Mammary epithelial cell (primary cell): ENCODE measurements at regions of chr3 and their contacts with region 1.

Region 1: DNA sequence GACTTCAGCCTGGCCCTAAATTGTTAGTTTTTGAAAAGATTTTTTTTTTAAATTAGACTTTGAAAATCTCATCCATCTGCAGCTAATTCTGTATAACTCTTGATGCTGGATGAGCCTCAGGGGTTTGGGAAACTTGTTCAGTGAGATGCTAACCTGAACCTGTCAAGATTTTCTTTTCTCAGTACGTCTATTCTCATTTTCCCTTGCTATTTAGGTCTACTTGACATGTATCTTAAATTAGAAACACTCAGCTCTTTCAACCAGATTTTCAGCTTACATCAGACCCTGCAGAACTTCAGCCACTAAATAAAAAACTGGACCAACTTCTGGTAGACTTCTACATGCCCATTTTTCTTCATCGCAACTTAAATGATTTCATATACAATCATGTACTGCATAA is 61.4 kb downstream of the MFSD1 start:
- DNase-seq: no peak
- H3K4me3 ChIP-seq: no peak overlapping the region
- H3K27ac ChIP-seq: no peak overlapping the region
- H3K4me1 ChIP-seq: no peaks in the 10 kb centered on the region
- H3K27me3 ChIP-seq: no peaks in the 10 kb centered on the region
- CTCF ChIP-seq: no peak

Region 2: DNA sequence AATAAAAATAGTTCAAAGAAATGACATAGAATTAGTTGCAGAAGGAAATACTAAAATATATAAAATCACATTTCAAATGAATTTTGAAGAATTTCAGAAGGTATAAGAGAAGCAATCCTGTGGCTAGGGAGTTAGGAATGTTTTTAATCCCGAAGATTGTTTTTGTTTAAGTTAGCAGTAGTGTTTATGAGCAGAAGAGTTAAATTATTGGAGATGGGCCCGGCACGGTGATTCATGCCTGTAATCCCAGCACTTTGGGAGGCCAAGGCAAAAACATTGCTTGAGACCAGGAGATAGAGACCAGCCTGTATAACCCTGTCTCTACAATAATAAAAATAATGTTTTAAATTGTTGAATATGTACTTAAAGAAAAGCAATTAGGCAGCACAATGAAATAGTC is 371.1 kb after region 1 on chr3:
- CTCF ChIA-PET with region 1: no interaction called
- dilution Hi-C with region 1: loop called (anchors 25 kb)
- in situ Hi-C with region 1: no loop called
- intact Hi-C with region 1: no loop called
- DNase-seq: no peak
- H3K4me3 ChIP-seq: no peak overlapping the region
- H3K27ac ChIP-seq: no peak overlapping the region
- H3K4me1 ChIP-seq: no peaks in the 10 kb centered on the region
- H3K27me3 ChIP-seq: no peaks in the 10 kb centered on the region
- CTCF ChIP-seq: no peak

Region 3: DNA sequence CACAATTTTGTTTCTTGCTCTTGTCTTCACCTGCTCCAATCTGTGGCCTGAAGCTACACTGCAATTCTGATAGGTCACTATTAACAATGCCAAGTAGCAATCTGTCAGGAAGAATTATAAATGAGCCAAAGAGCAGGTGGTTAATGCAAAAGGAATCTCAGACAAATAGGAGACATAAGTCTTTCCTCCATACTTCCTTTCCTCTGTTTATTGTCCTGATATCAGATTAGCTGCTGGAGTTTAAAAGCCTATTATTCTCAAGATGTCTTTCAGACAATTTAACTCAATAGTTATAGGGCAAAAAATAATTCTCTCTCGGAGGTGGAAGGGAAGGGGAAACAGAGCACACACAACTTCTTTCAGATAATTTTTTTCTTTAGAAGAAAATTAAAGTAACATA is 430.2 kb after region 1 on chr3:
- CTCF ChIA-PET with region 1: no interaction called
- dilution Hi-C with region 1: no loop called
- in situ Hi-C with region 1: no loop called
- intact Hi-C with region 1: no loop called
- DNase-seq: no peak
- H3K4me3 ChIP-seq: no peak overlapping the region
- H3K27ac ChIP-seq: no peak overlapping the region
- H3K4me1 ChIP-seq: no peaks in the 10 kb centered on the region
- H3K27me3 ChIP-seq: no peaks in the 10 kb centered on the region
- CTCF ChIP-seq: no peak